Activated B cell treated with CpG ODN at 0.5 μM for 24 hours (primary cell): ENCODE measurements at regions of chr17 and their contacts with region 1.

Region 1: DNA sequence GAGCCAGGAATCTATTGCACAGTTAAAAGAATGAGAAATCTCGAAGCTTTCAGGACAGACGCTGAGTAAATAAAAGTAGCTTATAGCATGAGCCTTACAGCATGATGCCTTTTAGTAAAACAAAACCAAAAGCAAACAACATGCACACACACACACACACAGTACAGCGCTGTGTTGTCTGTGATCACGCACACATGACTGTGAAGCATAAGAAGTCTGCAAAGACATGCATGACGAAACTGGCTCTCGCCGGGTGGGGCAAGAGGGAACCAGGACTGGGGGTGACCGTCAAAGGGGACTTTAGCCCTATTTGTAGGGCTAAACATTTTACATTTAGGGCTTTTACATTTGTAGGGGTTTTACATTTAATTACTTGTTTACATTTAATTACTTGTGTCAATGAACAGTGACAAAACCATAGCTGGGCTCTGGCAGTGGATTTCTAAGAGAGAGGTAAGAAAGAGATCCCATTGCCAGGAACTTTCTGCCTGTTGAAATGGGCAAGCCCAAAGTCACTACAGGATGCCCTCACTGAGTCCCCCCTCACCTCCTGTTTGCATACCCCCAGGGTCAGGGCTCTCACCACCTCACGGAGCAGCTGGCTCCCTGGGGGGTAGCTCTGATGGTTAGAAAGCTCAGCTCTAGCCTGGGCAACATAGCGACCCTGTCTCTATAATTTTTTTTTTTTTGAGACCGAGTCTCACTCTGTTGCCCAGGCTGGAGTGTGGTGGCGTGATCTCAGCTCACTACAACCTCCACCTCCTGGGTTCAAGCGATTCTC is 2.0 kb upstream of the TNFRSF13B start:
- DNase-seq: peak; percentile 48
- ATAC-seq: peak; percentile 39
- H3K4me3 Mint-ChIP-seq: peak overlapping the region; percentile 91
- H3K27ac Mint-ChIP-seq: peak overlapping the region; percentile 94
- H3K4me1 Mint-ChIP-seq: peaks cover 96% of the 10 kb centered on the region
- H3K27me3 Mint-ChIP-seq: no peaks in the 10 kb centered on the region
- CTCF ChIP-seq: no peak

Region 2: DNA sequence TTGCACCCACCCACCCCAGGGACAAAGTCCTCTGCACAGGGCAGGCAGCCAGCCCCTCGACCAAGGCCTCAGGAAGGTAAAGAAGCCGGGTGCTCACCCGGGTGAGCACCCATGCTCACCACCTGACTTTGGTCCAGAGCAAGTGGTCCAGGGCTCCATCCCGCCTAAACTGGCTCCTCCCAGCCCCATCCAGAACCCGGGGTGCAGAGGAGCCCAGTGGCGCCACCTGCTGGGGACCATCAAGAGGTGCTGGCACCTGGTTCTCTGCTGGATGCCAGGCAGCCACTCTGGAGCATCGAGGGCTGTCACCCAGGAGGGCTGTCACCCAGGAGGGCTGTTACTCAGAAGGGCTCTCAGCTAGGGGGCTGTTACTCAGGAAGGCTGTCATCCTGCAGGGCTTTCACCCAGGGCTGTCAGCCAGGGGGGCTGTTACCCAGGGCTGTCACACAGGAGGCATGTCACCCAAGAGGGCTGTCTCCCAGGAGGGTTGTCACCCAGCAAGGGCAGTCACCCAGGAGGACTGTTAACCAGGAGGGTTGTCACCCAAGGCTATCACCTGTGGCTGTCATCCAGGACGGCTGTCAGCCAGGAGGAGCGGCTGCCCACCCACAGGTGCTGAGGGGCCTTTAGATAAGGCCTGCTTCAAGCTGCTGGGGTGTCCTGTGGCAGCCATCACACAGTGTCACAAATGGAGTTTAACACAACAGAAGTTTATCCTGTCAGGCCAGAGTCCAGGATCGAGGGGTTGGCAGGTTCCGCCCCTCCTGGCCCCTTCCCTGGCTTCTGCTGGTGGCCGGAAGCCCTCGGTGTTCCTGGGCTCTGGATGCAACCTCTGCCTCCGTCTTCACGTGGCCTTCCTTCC is 100.5 kb before region 1 on chr17:
- CTCF ChIA-PET with region 1: no interaction called
- POLR2A ChIA-PET with region 1: no interaction called
- intact Hi-C with region 1: no loop called
- DNase-seq: peak; percentile 24
- ATAC-seq: peak; percentile 34
- H3K4me3 Mint-ChIP-seq: no peak overlapping the region
- H3K27ac Mint-ChIP-seq: no peak overlapping the region
- H3K4me1 Mint-ChIP-seq: no peaks in the 10 kb centered on the region
- H3K27me3 Mint-ChIP-seq: peaks cover 2% of the 10 kb centered on the region
- CTCF ChIP-seq: no peak

Region 3: DNA sequence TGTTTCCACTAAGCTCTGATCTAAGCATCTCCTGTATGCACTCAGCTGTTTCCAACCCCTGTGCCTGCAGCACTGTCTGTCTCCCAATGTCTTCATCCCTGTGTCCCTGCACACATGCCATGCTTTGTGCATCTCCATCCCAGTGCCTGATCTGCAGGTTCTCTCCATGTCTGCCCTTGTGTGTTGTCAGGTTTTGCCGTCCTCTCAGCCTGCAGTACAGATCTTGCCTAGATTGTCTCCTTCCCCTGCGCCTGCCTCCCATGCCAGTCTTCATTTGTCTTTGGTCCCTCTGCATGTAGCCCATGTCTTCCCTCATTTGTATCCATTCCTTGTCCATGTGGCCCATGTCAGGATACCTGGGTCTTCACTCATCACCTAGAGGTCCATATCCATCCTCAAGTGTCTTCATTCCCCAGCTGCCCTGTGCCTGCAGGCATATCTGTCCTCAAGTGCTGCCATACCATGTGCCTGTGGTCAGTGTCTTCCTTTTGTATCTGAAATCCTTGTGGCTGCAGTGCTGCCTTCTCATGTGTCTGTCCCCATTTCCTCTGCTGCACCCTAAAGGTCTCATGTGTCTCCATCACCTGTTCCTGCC is 73.6 kb before region 1 on chr17:
- CTCF ChIA-PET with region 1: no interaction called
- POLR2A ChIA-PET with region 1: no interaction called
- intact Hi-C with region 1: no loop called
- DNase-seq: no peak
- ATAC-seq: no peak
- H3K4me3 Mint-ChIP-seq: no peak overlapping the region
- H3K27ac Mint-ChIP-seq: no peak overlapping the region
- H3K4me1 Mint-ChIP-seq: peaks cover 2% of the 10 kb centered on the region
- H3K27me3 Mint-ChIP-seq: peaks cover 31% of the 10 kb centered on the region
- CTCF ChIP-seq: no peak

Region 4: GRCh38 chr17:16945663-16946218 is 28.2 kb before region 1 on chr17:
- CTCF ChIA-PET with region 1: interaction called, 4 read pairs
- POLR2A ChIA-PET with region 1: interaction called, 9 read pairs
- intact Hi-C with region 1: loop called (anchors 2 kb)
- DNase-seq: no peak
- ATAC-seq: no peak
- H3K4me3 Mint-ChIP-seq: peak overlapping the region; percentile 7
- H3K27ac Mint-ChIP-seq: peak overlapping the region; percentile 50
- H3K4me1 Mint-ChIP-seq: peaks cover 59% of the 10 kb centered on the region
- H3K27me3 Mint-ChIP-seq: no peaks in the 10 kb centered on the region
- CTCF ChIP-seq: no peak

Region 5: GRCh38 chr17:16962818-16963217 is 11.1 kb before region 1 on chr17:
- CTCF ChIA-PET with region 1: interaction called, 6 read pairs
- POLR2A ChIA-PET with region 1: interaction called, 337 read pairs
- intact Hi-C with region 1: loop called (anchors 2 kb)
- DNase-seq: no peak
- ATAC-seq: peak; percentile 35
- H3K4me3 Mint-ChIP-seq: peak overlapping the region; percentile 19
- H3K27ac Mint-ChIP-seq: peak overlapping the region; percentile 71
- H3K4me1 Mint-ChIP-seq: peaks cover 85% of the 10 kb centered on the region
- H3K27me3 Mint-ChIP-seq: no peaks in the 10 kb centered on the region
- CTCF ChIP-seq: no peak

Region 6: DNA sequence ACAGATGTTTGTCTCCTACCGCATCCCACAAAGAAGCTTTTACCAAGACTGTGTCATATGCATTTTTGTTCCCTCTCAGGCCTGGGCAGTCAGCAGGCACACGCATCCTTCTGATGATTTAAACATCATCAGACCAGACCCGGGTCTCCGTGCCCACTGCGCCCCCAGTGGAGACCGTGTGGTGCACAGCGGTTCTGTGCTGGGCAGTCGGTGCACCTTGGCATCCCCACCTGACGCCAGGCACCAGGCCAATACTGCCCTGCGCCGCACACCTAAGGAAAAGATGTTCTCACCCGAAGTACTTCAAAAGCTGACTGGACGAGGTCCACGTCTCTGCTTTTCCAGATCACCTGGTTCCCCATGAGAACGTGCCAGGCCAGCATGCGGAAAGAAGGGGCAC is 242.8 kb after region 1 on chr17:
- CTCF ChIA-PET with region 1: no interaction called
- POLR2A ChIA-PET with region 1: no interaction called
- intact Hi-C with region 1: no loop called
- DNase-seq: no peak
- ATAC-seq: no peak
- H3K4me3 Mint-ChIP-seq: no peak overlapping the region
- H3K27ac Mint-ChIP-seq: no peak overlapping the region
- H3K4me1 Mint-ChIP-seq: no peaks in the 10 kb centered on the region
- H3K27me3 Mint-ChIP-seq: no peaks in the 10 kb centered on the region
- CTCF ChIP-seq: no peak